Aorta (tissue), 5 donors: ENCODE measurements at regions of chr3 and their contacts with region 1.

Region 1: GRCh38 chr3:180989291-180990163 is at the start of gene DNAJC19:
- DNase-seq: peak; percentile 95
- ATAC-seq: peak; percentile 99
- H3K4me3 ChIP-seq: peak within 1 kb of the TSS; percentile 60 to 80
- H3K27ac ChIP-seq: peak within 1 kb of the TSS; percentile 1 to 56
- H3K4me1 ChIP-seq: peaks cover 0 to 5% of the 10 kb centered on the region in 2 donors
- H3K27me3 ChIP-seq: no peaks in the 10 kb centered on the region
- total RNA-seq, gene DNAJC19: 38.9 to 45.2 TPM

Region 2: DNA sequence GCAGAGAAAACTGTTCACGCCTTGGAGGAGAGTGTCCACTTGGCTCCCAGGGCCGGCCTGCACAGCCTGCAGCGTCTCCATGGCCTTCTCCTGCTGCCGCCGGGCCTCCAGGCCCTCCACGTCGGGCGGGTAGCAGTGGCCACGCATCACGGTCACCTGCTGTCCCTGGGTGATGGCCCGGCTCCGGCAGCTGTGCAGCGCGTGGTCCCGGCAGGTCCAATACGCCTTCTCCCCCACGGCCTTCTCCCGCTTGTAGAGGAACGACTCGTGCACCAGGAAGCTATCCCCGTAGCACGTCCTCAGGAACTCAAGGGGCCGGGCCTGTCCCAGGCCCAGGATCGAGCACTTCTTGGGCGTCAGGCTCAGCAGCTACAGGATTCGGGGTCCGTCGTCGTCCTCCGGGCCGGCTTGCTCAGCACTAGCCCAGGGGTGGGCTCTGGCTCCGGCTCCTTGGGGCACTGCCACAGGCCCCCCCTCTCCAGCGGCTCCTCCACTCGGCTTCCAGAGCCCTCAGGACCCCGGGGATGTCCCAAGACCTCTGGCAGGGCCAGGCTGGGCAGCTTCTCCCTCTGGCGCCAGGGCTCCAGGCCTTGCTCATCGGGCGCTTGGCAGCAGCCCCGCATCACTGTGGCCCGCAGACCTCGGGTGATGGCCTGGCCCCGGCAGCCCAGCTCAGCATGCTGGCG is 160.7 kb before region 1 on chr3:
- intact Hi-C with region 1: no loop called
- DNase-seq: peak in 1 of 2 donors; percentile 52
- ATAC-seq: peak; percentile 42
- H3K4me3 ChIP-seq: no peak overlapping the region
- H3K27ac ChIP-seq: no peak overlapping the region
- H3K4me1 ChIP-seq: no peaks in the 10 kb centered on the region
- H3K27me3 ChIP-seq: no peaks in the 10 kb centered on the region

Region 3: GRCh38 chr3:180870008-180870699 is 119.4 kb before region 1 on chr3:
- intact Hi-C with region 1: loop called in 1 of 2 experiments (anchors 5 kb)
- DNase-seq: peak; percentile 61 to 84
- ATAC-seq: peak; percentile 87
- H3K4me3 ChIP-seq: peak overlapping the region; percentile 18 to 30
- H3K27ac ChIP-seq: no peak overlapping the region
- H3K4me1 ChIP-seq: no peaks in the 10 kb centered on the region
- H3K27me3 ChIP-seq: no peaks in the 10 kb centered on the region

Region 4: DNA sequence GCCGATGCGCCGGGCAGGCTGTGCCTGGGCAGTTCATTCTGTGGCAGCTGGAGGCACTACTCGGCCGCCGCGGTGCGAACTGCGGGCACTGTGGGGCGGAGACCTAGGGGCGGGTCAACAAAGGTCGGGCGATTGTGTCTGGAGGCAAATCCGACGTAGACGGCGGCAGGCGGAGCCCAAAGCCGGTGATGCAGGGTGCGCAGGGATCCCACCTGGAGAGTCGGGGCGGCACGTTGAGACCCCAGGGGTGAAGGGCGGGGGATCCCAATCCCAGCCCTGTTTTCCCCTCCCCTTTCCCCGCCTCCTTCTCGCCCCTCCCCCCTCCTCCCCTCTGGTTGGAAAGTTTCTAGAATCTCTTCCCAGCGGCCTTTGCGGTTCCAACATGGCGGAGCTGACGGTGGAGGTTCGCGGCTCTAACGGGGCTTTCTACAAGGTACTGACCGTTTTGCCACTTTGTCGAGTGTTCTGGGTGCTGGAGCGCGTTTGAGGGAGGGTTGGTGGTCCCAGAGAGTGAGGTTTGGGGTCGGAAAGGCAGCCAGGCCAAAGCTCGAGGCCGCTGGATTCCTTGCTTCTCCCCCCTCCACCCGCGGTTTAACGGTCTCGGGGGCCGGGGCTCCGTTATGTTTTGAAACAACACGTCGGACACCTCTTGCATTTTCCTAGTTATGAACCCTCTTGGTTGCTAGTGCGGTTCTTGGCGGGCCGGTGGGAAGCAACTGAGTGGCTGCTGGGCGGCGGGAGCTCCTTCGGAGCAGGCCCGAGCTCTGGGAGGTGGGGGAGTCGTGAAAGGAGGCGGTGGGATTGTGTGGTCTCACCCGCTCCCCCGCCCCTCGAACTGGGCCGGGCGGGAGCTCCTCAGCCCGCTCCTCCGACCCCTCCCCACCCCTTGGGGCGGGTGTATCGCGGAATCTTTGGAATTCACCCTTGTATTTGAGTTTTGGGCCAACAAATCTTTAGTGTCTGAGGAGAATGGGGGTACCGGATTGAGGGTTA is 76.9 kb before region 1 on chr3 and contains the start of gene FXR1:
- intact Hi-C with region 1: loop called (anchors 5 to 10 kb)
- DNase-seq: peak; percentile 93 to 96
- ATAC-seq: peak; percentile 98
- H3K4me3 ChIP-seq: peak within 1 kb of the TSS; percentile 93 to 100
- H3K27ac ChIP-seq: peak within 1 kb of the TSS; percentile 62 to 91
- H3K4me1 ChIP-seq: peaks cover 0 to 4% of the 10 kb centered on the region in 2 donors
- H3K27me3 ChIP-seq: no peaks in the 10 kb centered on the region
- total RNA-seq, gene FXR1: 106 to 120 TPM

Region 5: DNA sequence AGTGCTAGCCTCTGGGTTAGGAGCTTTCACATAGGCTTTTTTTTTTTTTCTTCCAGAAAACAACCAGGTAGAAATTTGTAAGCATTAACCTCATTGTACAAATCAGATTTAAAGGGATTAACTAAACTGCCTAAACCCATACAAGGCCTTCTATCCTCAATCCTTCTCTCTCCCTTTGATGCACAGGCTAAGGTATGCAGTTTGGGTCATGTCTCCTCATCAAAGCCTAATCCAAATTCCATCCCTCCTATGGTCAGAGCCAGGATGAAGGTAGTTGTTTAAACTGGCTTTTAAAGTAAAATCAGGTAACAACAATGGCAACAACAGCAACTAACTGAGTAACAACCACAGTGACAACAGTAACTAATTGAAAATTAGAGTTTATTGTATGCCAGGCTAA is 606.6 kb after region 1 on chr3:
- intact Hi-C with region 1: no loop called
- DNase-seq: no peak
- ATAC-seq: no peak
- H3K4me3 ChIP-seq: no peak overlapping the region
- H3K27ac ChIP-seq: no peak overlapping the region
- H3K4me1 ChIP-seq: no peaks in the 10 kb centered on the region
- H3K27me3 ChIP-seq: no peaks in the 10 kb centered on the region